Vagina (tissue), 2 donors: ENCODE measurements at regions of chr12 and their contacts with region 1.

Region 1: GRCh38 chr12:34022079-34022830 is at the start of gene ALG10:
- DNase-seq: peak; percentile 95 to 97
- H3K4me3 ChIP-seq: peak within 1 kb of the TSS; percentile 73 to 78
- H3K27ac ChIP-seq: peak within 1 kb of the TSS; percentile 80
- H3K4me1 ChIP-seq: peaks cover 18% of the 10 kb centered on the region
- H3K27me3 ChIP-seq: no peaks in the 10 kb centered on the region
- CTCF ChIP-seq: peak; percentile 36 to 52 (median 51)
- POLR2A ChIP-seq: no peak
- total RNA-seq, gene ALG10: 6.1 TPM

Region 2: GRCh38 chr12:32755654-32756475 is 1266.4 kb before region 1 on chr12 and contains the start of gene YARS2:
- intact Hi-C with region 1: loop called (anchors 5 kb)
- DNase-seq: peak in 1 of 2 donors; percentile 96
- H3K4me3 ChIP-seq: peak within 1 kb of the TSS; percentile 79 to 89
- H3K27ac ChIP-seq: peak within 1 kb of the TSS; percentile 92
- H3K4me1 ChIP-seq: peaks cover 22% of the 10 kb centered on the region
- H3K27me3 ChIP-seq: no peaks in the 10 kb centered on the region
- CTCF ChIP-seq: peak; percentile 62 to 78 (median 65)
- POLR2A ChIP-seq: no peak
- total RNA-seq, gene YARS2: 23.6 TPM

Region 3: DNA sequence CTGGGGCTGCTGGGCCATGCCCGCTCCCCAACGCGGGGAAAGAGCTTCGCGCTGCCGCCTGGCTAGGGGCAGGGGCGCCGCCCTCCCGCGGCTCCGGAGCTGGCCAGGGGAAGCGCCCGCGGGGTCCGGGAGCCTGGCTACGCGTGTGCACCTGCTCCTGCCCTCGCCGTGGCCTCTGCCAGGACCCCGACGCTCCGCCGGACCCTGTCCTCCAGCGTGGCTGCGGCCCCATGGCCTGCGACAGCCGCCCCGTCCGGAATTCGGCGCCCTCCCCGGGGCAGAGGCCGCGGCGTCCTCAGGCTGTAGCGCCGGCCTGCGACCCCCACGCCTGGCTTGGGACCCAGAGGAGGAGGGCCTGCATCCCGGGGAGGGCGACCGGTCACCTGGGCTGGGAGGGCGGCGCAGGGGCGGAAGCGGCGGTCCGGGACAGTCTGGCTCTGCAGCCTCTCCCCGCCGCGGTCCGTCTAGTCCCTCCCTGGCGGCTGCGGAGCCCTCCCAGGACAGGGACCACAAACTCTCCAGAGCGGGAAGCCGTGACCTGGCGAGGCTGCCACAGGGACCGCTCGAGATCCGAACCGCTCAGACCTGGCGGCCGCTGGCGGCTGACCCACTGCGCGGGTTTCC is 85.6 kb after region 1 on chr12:
- intact Hi-C with region 1: no loop called
- DNase-seq: no peak
- H3K4me3 ChIP-seq: no peak overlapping the region
- H3K27ac ChIP-seq: no peak overlapping the region
- H3K4me1 ChIP-seq: no peaks in the 10 kb centered on the region
- H3K27me3 ChIP-seq: peaks cover 8% of the 10 kb centered on the region
- CTCF ChIP-seq: no peak
- POLR2A ChIP-seq: no peak